IMR-90 (cell line): ENCODE measurements at regions of chr18 and their contacts with region 1.

Region 1: DNA sequence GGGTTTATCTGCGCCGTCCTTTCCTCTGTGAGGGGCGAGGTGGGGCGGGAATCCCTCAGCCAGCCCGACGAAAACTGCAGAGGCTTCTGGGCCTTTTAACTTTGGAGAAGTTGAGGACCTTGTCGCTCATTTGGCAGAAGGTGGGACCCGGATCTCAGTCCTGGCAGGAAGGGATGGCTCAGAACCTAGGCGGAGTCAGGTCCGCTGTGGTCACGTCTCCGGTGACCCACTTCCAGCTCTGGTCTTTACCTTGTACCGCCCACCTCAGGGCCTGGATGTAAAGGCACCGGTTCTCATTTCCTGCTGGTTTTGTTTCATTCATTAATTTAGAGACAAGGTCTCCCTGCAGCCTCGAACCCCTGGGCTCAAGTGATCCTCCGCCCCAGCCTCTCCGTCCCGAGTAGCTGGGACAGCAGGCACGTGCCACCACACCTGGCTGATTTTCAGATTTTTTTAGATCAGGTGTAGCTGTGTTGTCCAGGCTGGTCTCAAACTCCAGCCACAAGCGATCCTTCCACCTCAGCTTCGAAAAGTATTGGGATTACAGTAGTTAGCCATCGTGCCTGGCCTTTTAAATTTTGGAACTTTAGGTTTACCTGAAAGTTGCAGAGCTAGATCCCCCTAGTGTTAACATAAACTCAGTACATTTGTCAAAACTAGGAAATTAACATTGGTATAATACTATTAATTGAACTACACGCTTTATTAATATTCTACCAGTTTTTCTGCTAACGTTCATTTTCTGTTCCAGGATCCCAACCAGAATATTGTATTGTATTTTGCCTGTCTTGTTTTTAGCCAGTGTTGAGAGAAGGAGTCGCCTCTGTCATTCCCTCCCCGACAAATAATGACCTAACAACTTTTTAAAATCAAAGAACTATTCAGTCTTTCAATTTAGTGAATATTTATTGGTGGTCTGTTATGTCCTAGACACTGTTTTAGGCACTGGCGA is 852 bp downstream of the POLI start:
- DNase-seq: peak; percentile 18
- ATAC-seq: peak; percentile 36
- H3K4me3 ChIP-seq: peak overlapping the region; percentile 66
- H3K27ac ChIP-seq: peak overlapping the region; percentile 72
- H3K4me1 ChIP-seq: no peaks in the 10 kb centered on the region
- H3K27me3 ChIP-seq: no peaks in the 10 kb centered on the region
- CTCF ChIP-seq: peak; percentile 34; the same call in 1 of the 2 replicates
- POLR2A ChIP-seq: no peak
- RAD21 ChIP-seq: peak; percentile 26

Region 2: GRCh38 chr18:53610957-53611356 is 659.2 kb before region 1 on chr18:
- CTCF ChIA-PET with region 1: no interaction called
- POLR2A ChIA-PET with region 1: no interaction called
- dilution Hi-C with region 1: no loop called
- in situ Hi-C with region 1: no loop called
- intact Hi-C with region 1: no loop called
- DNase-seq: no peak
- ATAC-seq: no peak
- H3K4me3 ChIP-seq: no peak overlapping the region
- H3K27ac ChIP-seq: no peak overlapping the region
- H3K4me1 ChIP-seq: no peaks in the 10 kb centered on the region
- H3K27me3 ChIP-seq: no peaks in the 10 kb centered on the region
- CTCF ChIP-seq: no peak
- POLR2A ChIP-seq: no peak
- RAD21 ChIP-seq: no peak

Region 3: GRCh38 chr18:54149078-54149697 is 121.0 kb before region 1 on chr18:
- CTCF ChIA-PET with region 1: no interaction called
- POLR2A ChIA-PET with region 1: no interaction called
- dilution Hi-C with region 1: no loop called
- in situ Hi-C with region 1: no loop called
- intact Hi-C with region 1: loop called (anchors 5 kb)
- DNase-seq: peak; percentile 88
- ATAC-seq: peak; percentile 93
- H3K4me3 ChIP-seq: peak overlapping the region; percentile 10; the same call in 1 of the 2 replicates
- H3K27ac ChIP-seq: peak overlapping the region; percentile 30; the same call in 1 of the 2 replicates
- H3K4me1 ChIP-seq: peaks cover 7% of the 10 kb centered on the region
- H3K27me3 ChIP-seq: no peaks in the 10 kb centered on the region
- CTCF ChIP-seq: no peak
- POLR2A ChIP-seq: no peak
- RAD21 ChIP-seq: no peak

Region 4: GRCh38 chr18:54284981-54285785 is 15.0 kb after region 1 on chr18:
- CTCF ChIA-PET with region 1: interaction called, 3 read pairs
- POLR2A ChIA-PET with region 1: no interaction called
- dilution Hi-C with region 1: no loop called
- in situ Hi-C with region 1: no loop called
- intact Hi-C with region 1: loop called (anchors 2 kb)
- DNase-seq: peak; percentile 75
- ATAC-seq: peak; percentile 99
- H3K4me3 ChIP-seq: no peak overlapping the region
- H3K27ac ChIP-seq: no peak overlapping the region
- H3K4me1 ChIP-seq: no peaks in the 10 kb centered on the region
- H3K27me3 ChIP-seq: no peaks in the 10 kb centered on the region
- CTCF ChIP-seq: no peak
- POLR2A ChIP-seq: no peak
- RAD21 ChIP-seq: no peak

Region 5: GRCh38 chr18:54387631-54388030 is 117.5 kb after region 1 on chr18:
- CTCF ChIA-PET with region 1: no interaction called
- POLR2A ChIA-PET with region 1: no interaction called
- dilution Hi-C with region 1: no loop called
- in situ Hi-C with region 1: no loop called
- intact Hi-C with region 1: no loop called
- DNase-seq: no peak
- ATAC-seq: no peak
- H3K4me3 ChIP-seq: no peak overlapping the region
- H3K27ac ChIP-seq: no peak overlapping the region
- H3K4me1 ChIP-seq: no peaks in the 10 kb centered on the region
- H3K27me3 ChIP-seq: no peaks in the 10 kb centered on the region
- CTCF ChIP-seq: no peak
- POLR2A ChIP-seq: no peak
- RAD21 ChIP-seq: no peak

Region 6: GRCh38 chr18:54734059-54734458 is 463.9 kb after region 1 on chr18:
- CTCF ChIA-PET with region 1: no interaction called
- POLR2A ChIA-PET with region 1: no interaction called
- dilution Hi-C with region 1: no loop called
- in situ Hi-C with region 1: no loop called
- intact Hi-C with region 1: no loop called
- DNase-seq: peak; percentile 96
- ATAC-seq: peak; percentile 98
- H3K4me3 ChIP-seq: no peak overlapping the region
- H3K27ac ChIP-seq: no peak overlapping the region
- H3K4me1 ChIP-seq: peaks cover 5% of the 10 kb centered on the region; the same call in 1 of the 2 replicates
- H3K27me3 ChIP-seq: no peaks in the 10 kb centered on the region
- CTCF ChIP-seq: no peak
- POLR2A ChIP-seq: no peak
- RAD21 ChIP-seq: 0 out of 2 replicates have a peak, but pooled peaks have one; percentile 10